Mammary epithelial cell (primary cell): ENCODE measurements at regions of chr1 and their contacts with region 1.

Region 1: DNA sequence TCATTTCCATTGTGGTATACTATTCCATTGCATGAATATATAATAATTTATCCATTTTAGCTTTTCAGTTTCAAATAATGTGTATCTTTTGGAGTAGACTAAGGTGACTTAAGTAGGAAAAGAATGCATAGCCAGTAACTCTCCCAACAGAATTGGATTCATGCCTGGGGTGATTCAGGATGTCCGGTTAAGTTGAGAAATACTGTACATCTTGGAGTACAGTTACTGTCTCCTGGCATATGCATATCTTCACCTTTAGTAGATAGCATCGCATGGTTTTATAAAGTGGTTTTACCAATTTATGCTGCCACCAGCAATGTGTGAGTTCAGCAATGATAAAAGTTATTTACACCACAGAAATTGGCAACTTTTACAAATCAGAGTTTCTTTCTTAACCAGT is 18.6 kb upstream of the SLC6A9 start:
- DNase-seq: peak; percentile 90
- H3K4me3 ChIP-seq: no peak overlapping the region
- H3K27ac ChIP-seq: peak overlapping the region; percentile 18
- H3K4me1 ChIP-seq: peaks cover 36% of the 10 kb centered on the region
- H3K27me3 ChIP-seq: no peaks in the 10 kb centered on the region
- CTCF ChIP-seq: no peak

Region 2: GRCh38 chr1:43253876-43254275 is 796.0 kb before region 1 on chr1:
- CTCF ChIA-PET with region 1: interaction called, 10 read pairs
- dilution Hi-C with region 1: no loop called
- in situ Hi-C with region 1: no loop called
- intact Hi-C with region 1: no loop called
- DNase-seq: no peak
- H3K4me3 ChIP-seq: no peak overlapping the region
- H3K27ac ChIP-seq: no peak overlapping the region
- H3K4me1 ChIP-seq: no peaks in the 10 kb centered on the region
- H3K27me3 ChIP-seq: no peaks in the 10 kb centered on the region
- CTCF ChIP-seq: no peak

Region 3: GRCh38 chr1:43545695-43546387 is 504.0 kb before region 1 on chr1:
- CTCF ChIA-PET with region 1: no interaction called
- dilution Hi-C with region 1: no loop called
- in situ Hi-C with region 1: no loop called
- intact Hi-C with region 1: no loop called
- DNase-seq: no peak
- H3K4me3 ChIP-seq: no peak overlapping the region
- H3K27ac ChIP-seq: no peak overlapping the region
- H3K4me1 ChIP-seq: peaks cover 48% of the 10 kb centered on the region
- H3K27me3 ChIP-seq: no peaks in the 10 kb centered on the region
- CTCF ChIP-seq: no peak

Region 4: DNA sequence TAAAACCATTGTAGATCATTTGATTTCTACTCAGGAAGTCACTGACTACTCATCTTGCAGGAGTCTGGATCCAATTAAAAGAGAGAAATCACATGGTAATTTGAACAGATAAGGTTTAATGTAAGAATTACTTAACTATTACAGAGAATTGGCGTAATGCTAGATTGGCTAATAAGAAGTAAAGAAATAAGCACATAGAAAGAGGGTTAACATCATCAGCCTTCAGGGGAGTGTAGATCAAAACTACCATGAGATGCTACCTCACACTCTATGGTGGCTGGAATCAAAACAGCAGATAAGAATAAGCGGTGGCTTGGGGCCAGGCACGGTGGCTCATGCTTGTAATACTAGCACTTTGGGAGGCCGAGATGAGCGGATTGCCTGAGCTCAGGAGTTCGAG is 330.8 kb before region 1 on chr1:
- CTCF ChIA-PET with region 1: no interaction called
- dilution Hi-C with region 1: loop called (anchors 5 kb)
- in situ Hi-C with region 1: no loop called
- intact Hi-C with region 1: no loop called
- DNase-seq: no peak
- H3K4me3 ChIP-seq: no peak overlapping the region
- H3K27ac ChIP-seq: no peak overlapping the region
- H3K4me1 ChIP-seq: no peaks in the 10 kb centered on the region
- H3K27me3 ChIP-seq: no peaks in the 10 kb centered on the region
- CTCF ChIP-seq: no peak

Region 5: DNA sequence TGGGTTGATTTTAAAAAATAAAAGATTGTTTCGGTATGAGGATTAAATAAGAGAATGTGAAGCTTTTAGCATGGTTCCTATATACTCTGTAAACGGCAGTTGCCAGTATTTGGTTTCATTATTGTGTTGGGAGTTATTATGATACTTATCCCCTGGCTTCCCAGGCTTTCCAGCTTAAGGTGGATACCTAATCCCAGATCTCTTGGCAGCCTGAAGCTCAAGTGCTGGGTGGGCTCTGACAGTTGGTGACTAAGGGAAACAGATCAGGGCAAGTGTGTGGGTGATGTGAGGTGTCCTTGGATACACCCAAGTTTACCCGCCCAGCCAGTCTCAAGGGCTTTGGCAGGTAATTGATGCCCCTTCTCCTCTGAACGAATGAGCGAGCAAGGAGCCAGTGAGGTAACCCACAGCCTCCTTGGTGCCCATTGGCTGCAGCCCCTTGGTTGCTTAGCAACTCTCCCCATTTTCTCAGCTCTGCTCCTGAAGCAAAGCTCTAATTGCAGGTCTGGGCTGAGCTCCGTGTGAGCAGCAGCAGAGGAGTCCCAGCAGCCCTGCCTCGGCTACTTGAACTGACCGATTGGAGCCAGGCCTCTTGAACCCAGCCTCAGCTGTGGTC is 97.0 kb before region 1 on chr1:
- CTCF ChIA-PET with region 1: interaction called, 15 read pairs
- dilution Hi-C with region 1: no loop called
- in situ Hi-C with region 1: no loop called
- intact Hi-C with region 1: no loop called
- DNase-seq: no peak
- H3K4me3 ChIP-seq: no peak overlapping the region
- H3K27ac ChIP-seq: no peak overlapping the region
- H3K4me1 ChIP-seq: peaks cover 14% of the 10 kb centered on the region
- H3K27me3 ChIP-seq: no peaks in the 10 kb centered on the region
- CTCF ChIP-seq: no peak

Region 6: DNA sequence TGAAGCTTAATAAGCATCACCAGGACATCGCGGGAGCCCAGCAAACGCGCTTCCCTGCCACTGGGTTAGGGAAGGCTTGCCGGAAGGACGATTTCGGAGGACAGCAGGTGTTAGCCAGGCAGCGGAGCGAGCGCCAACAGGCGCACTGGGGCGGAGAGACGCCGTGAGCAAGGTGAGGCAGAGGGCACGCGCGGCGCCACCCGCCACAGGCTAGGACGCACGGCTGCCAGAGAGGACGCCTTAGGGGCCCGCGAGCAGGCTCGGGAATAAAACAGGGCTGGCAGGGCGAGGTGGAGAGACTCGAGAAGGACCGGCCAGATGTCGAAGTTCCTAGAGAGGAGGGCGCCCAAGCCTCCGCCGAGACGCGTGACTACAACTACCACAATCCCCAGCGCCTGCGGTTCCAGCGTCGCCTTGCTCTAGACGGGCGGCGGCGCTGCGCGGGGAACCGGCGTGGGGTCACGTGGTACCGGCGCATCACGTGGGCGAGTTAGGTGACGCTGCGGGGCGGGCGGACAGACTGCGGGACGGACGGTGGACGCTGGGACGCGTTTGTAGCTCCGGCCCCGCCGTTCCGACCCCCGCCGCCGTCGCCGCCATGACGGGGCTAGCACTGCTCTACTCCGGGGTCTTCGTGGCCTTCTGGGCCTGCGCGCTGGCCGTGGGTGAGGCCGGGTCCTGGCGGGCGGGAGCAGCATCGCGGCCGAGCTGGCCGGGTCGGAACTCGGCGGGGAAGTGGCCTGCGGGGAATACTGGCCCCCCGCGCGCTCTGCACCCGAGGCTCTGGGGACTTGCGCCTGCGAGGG is 75.2 kb before region 1 on chr1 and contains the start of gene ATP6V0B:
- CTCF ChIA-PET with region 1: no interaction called
- dilution Hi-C with region 1: loop called (anchors 10 kb)
- in situ Hi-C with region 1: no loop called
- intact Hi-C with region 1: no loop called
- DNase-seq: peak; percentile 93
- H3K4me3 ChIP-seq: peak within 1 kb of the TSS; percentile 86 to 94 (median 89)
- H3K27ac ChIP-seq: peak within 1 kb of the TSS; percentile 64
- H3K4me1 ChIP-seq: peaks cover 39% of the 10 kb centered on the region
- H3K27me3 ChIP-seq: no peaks in the 10 kb centered on the region
- CTCF ChIP-seq: no peak
- total RNA-seq, gene ATP6V0B: 84.4 to 127 TPM

Region 7: GRCh38 chr1:43991476-43992231 is 58.2 kb before region 1 on chr1 and contains the start of gene CCDC24:
- CTCF ChIA-PET with region 1: no interaction called
- dilution Hi-C with region 1: no loop called
- in situ Hi-C with region 1: no loop called
- intact Hi-C with region 1: loop called (anchors 2 kb)
- DNase-seq: peak; percentile 83
- H3K4me3 ChIP-seq: peak within 1 kb of the TSS; percentile 40 to 81 (median 55)
- H3K27ac ChIP-seq: peak within 1 kb of the TSS; percentile 77
- H3K4me1 ChIP-seq: peaks cover 14% of the 10 kb centered on the region
- H3K27me3 ChIP-seq: no peaks in the 10 kb centered on the region
- CTCF ChIP-seq: no peak
- total RNA-seq, gene CCDC24: 5.8 to 10.5 TPM

Region 8: GRCh38 chr1:44002606-44003157 is 47.2 kb before region 1 on chr1:
- CTCF ChIA-PET with region 1: no interaction called
- dilution Hi-C with region 1: no loop called
- in situ Hi-C with region 1: no loop called
- intact Hi-C with region 1: loop called (anchors 1 kb)
- DNase-seq: no peak
- H3K4me3 ChIP-seq: no peak overlapping the region
- H3K27ac ChIP-seq: no peak overlapping the region
- H3K4me1 ChIP-seq: no peaks in the 10 kb centered on the region
- H3K27me3 ChIP-seq: no peaks in the 10 kb centered on the region
- CTCF ChIP-seq: peak in 1 of 2 donors; percentile 9

Region 9: GRCh38 chr1:44170281-44170823 is 120.5 kb after region 1 on chr1:
- CTCF ChIA-PET with region 1: no interaction called
- dilution Hi-C with region 1: no loop called
- in situ Hi-C with region 1: no loop called
- intact Hi-C with region 1: no loop called
- DNase-seq: no peak
- H3K4me3 ChIP-seq: no peak overlapping the region
- H3K27ac ChIP-seq: no peak overlapping the region
- H3K4me1 ChIP-seq: no peaks in the 10 kb centered on the region
- H3K27me3 ChIP-seq: no peaks in the 10 kb centered on the region
- CTCF ChIP-seq: peak in 1 of 2 donors; percentile 14